PC-9 (cell line): ENCODE measurements at regions of chr11 and their contacts with region 1.

Region 1: DNA sequence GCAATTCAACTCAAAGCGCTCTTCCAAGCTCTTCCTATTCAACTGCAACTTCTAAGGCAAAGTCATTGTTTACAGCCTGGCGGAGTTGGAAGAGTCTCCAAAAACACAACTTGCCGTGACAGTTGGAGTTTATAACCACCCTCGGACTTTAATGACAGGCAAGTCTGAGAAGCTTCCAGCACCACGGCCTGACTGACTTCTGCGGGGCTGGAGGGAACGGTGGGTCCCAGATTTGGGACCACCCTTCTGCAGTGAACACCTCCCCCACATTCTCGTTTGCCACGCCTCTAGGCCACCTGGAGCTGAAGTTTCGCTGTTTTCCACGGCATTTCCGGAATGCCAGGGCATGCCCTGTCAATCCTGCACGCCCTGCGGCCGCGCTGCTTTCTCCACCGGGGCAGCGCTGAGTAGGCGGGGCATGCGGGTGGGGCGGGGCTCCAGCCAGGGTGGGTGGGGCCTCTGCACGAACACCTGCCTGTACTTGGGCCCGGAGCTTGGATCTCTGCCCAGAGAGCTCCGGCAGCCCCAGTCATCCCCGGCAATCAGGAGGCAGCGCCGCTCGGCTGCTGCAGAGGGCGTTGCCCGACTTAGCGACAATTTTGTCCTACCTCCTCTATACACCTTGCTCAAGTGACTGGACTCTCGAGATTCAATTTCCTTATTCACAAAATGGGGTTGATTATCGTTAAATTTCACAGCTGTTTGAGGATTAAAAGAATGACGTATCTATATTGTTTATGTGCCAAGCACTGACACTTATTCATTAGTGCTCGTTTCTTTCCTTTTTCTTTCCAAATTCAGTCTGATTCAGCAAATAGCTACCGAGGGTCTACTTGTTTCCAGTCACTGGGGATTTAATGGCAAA is 48.7 kb upstream of the BIRC3 start:
- DNase-seq: peak; percentile 93 to 96
- H3K4me3 ChIP-seq: peak overlapping the region; percentile 73
- H3K27ac ChIP-seq: peak overlapping the region; percentile 80
- H3K4me1 ChIP-seq: peaks cover 39% of the 10 kb centered on the region
- H3K27me3 ChIP-seq: no peaks in the 10 kb centered on the region
- CTCF ChIP-seq: peak; percentile 73

Region 2: GRCh38 chr11:102007567-102008437 is 260.8 kb before region 1 on chr11:
- CTCF ChIA-PET with region 1: interaction called, 5 read pairs
- POLR2A ChIA-PET with region 1: no interaction called
- intact Hi-C with region 1: loop called (anchors 1 kb)
- DNase-seq: peak; percentile 46 to 99
- H3K4me3 ChIP-seq: 0 out of 2 replicates have a peak overlapping the region, but pooled peaks have one; percentile 6
- H3K27ac ChIP-seq: peak overlapping the region; percentile 90
- H3K4me1 ChIP-seq: peaks cover 68% of the 10 kb centered on the region
- H3K27me3 ChIP-seq: no peaks in the 10 kb centered on the region
- CTCF ChIP-seq: peak; percentile 88

Region 3: DNA sequence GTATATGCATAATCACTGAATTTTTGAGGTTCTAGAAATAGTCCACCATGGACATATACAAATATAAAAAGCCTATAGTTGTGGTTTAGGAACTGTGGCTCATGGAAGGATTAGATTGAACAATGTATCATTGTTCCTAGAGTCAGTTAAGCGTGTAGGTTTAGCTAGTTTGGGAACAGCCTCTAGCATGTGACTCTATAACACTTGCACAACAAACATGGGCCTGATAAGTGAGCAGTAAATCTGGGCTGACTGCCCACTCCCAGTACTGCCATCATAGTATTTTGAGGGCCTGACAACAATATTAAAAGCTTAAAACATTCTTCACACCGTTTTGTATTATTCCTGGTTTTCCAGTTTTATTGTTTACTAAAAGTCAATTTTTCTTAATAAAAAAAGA is 111.3 kb before region 1 on chr11:
- CTCF ChIA-PET with region 1: no interaction called
- POLR2A ChIA-PET with region 1: interaction called, 4 read pairs
- intact Hi-C with region 1: loop called (anchors 5 kb)
- DNase-seq: peak; percentile 15 to 58
- H3K4me3 ChIP-seq: no peak overlapping the region
- H3K27ac ChIP-seq: peak overlapping the region; percentile 81
- H3K4me1 ChIP-seq: peaks cover 64% of the 10 kb centered on the region
- H3K27me3 ChIP-seq: no peaks in the 10 kb centered on the region
- CTCF ChIP-seq: no peak

Region 4: DNA sequence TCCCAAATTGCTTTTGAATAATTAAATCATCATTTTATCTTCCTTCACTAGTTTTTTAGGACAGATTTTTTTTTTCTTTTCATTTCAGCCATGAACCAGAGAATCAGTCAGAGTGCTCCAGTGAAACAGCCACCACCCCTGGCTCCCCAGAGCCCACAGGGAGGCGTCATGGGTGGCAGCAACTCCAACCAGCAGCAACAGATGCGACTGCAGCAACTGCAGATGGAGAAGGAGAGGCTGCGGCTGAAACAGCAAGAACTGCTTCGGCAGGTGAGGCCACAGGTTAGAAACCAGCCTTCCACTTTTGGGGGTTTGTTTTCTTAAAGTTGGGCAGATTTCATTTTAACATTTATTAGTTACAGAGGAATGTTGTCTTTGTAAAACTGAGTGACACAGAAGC is 62.8 kb before region 1 on chr11:
- CTCF ChIA-PET with region 1: no interaction called
- POLR2A ChIA-PET with region 1: no interaction called
- intact Hi-C with region 1: no loop called
- DNase-seq: no peak
- H3K4me3 ChIP-seq: no peak overlapping the region
- H3K27ac ChIP-seq: no peak overlapping the region
- H3K4me1 ChIP-seq: no peaks in the 10 kb centered on the region
- H3K27me3 ChIP-seq: no peaks in the 10 kb centered on the region
- CTCF ChIP-seq: no peak

Region 5: GRCh38 chr11:102225689-102226568 is 42.6 kb before region 1 on chr11:
- CTCF ChIA-PET with region 1: interaction called, 9 read pairs
- POLR2A ChIA-PET with region 1: no interaction called
- intact Hi-C with region 1: loop called (anchors 1 kb)
- DNase-seq: peak; percentile 8 to 52
- H3K4me3 ChIP-seq: 0 out of 2 replicates have a peak overlapping the region, but pooled peaks have one; percentile 15
- H3K27ac ChIP-seq: peak overlapping the region; percentile 59
- H3K4me1 ChIP-seq: peaks cover 59% of the 10 kb centered on the region
- H3K27me3 ChIP-seq: no peaks in the 10 kb centered on the region
- CTCF ChIP-seq: no peak

Region 6: GRCh38 chr11:102287964-102288724 is 19.6 kb after region 1 on chr11:
- CTCF ChIA-PET with region 1: interaction called, 10 read pairs
- POLR2A ChIA-PET with region 1: no interaction called
- intact Hi-C with region 1: no loop called
- DNase-seq: peak; percentile 38 to 67
- H3K4me3 ChIP-seq: no peak overlapping the region
- H3K27ac ChIP-seq: no peak overlapping the region
- H3K4me1 ChIP-seq: peaks cover 24% of the 10 kb centered on the region
- H3K27me3 ChIP-seq: no peaks in the 10 kb centered on the region
- CTCF ChIP-seq: peak; percentile 92

Region 7: DNA sequence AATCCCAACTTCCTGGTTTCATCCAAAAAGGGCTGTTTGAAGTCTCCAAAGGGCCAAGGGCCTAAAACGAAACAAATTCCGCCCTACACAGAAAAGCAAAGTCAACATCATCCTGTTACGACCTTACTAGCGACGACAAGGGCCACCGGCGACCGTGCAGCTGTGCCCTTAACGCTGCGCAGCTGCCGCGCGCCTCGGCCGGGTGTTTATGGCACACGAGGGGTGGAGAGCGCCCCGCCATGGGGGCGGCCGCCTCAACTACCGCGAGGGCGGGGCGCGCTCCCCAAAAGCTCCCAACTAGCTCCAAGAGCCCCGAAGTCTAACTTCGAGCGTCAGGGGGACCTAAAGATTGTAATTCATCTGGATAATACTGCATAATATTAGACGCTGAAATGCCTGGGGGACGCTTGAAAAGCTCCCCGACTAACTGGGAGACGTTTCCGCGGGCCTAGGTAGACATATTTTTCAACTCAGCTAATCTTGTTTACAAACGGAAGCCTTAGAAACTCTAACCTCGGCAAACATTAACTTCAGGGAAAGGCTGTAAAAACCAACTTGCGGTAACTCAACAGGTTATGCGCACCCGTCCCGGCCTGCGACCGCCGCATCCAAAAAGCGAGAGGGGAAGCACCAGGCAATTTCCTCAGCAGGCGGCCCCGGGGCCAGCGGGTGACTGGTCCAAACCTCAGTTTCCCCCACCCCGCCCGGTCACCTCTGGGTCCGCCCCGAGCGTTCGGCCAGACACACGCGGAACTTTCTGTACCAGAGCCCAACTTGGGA is 183.3 kb after region 1 on chr11:
- CTCF ChIA-PET with region 1: no interaction called
- POLR2A ChIA-PET with region 1: interaction called, 17 read pairs
- intact Hi-C with region 1: no loop called
- DNase-seq: peak; percentile 53 to 63
- H3K4me3 ChIP-seq: peak overlapping the region; percentile 88
- H3K27ac ChIP-seq: peak overlapping the region; percentile 72
- H3K4me1 ChIP-seq: peaks cover 62% of the 10 kb centered on the region
- H3K27me3 ChIP-seq: no peaks in the 10 kb centered on the region
- CTCF ChIP-seq: peak; percentile 20; the same call in 1 of the 2 replicates